Breast epithelium (tissue), 4 donors: ENCODE measurements at regions of chr19 and their contacts with region 1.

Region 1: DNA sequence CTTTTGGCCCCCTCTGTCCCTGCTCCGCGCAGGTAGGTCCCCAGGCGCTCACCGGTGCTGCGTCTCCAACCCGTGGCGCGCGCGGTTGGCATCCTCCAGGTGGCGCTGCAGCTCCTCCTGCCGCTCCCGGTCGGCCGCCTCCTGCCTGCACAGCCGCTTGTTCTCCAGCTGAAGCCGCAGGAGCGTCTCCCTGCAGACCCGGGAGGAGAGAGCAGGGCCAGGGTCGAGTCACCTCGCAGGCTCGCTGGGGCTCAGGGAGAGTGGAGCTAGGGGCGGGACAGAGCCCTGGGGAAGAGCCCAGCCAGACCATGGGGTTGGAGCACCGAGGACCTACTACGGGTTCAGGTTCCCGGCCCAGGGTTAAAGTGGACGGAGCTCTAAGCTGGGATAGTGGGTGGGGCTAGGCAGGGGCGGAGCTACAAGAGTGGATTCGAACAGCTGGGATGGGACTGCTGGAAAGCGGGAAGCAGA is 9.3 kb downstream of the HOOK2 start:
- DNase-seq: peak; percentile 77 to 79
- H3K4me3 ChIP-seq: peak overlapping the region; percentile 26 to 64 (median 49)
- H3K27ac ChIP-seq: peak overlapping the region; percentile 15 to 49
- H3K4me1 ChIP-seq: no peaks in the 10 kb centered on the region
- H3K27me3 ChIP-seq: no peaks in the 10 kb centered on the region
- CTCF ChIP-seq: peak; percentile 73 to 93 (median 91)
- POLR2A ChIP-seq: no peak

Region 2: GRCh38 chr19:12806239-12807081 is 40.4 kb after region 1 on chr19 and contains the start of gene RNASEH2A:
- intact Hi-C with region 1: loop called (anchors 5 kb)
- DNase-seq: peak; percentile 74 to 86
- H3K4me3 ChIP-seq: peak within 1 kb of the TSS; percentile 53 to 83 (median 71)
- H3K27ac ChIP-seq: peak within 1 kb of the TSS; percentile 59 to 68
- H3K4me1 ChIP-seq: peaks cover 0 to 5% of the 10 kb centered on the region in 2 donors
- H3K27me3 ChIP-seq: no peaks in the 10 kb centered on the region
- CTCF ChIP-seq: no peak
- POLR2A ChIP-seq: no peak
- total RNA-seq, gene RNASEH2A: 5.2 to 8.8 (median 8.5) TPM

Region 3: GRCh38 chr19:12847159-12848139 is 81.4 kb after region 1 on chr19:
- intact Hi-C with region 1: loop called (anchors 10 kb)
- DNase-seq: peak; percentile 74 to 85
- H3K4me3 ChIP-seq: peak overlapping the region in 2 of 3 donors; percentile 33 to 57
- H3K27ac ChIP-seq: no peak overlapping the region
- H3K4me1 ChIP-seq: peaks cover 0 to 5% of the 10 kb centered on the region in 2 donors
- H3K27me3 ChIP-seq: peaks cover 0 to 19% of the 10 kb centered on the region in 2 donors
- CTCF ChIP-seq: peak; percentile 96 to 99 (median 98)
- POLR2A ChIP-seq: no peak

Region 4: GRCh38 chr19:13093407-13094105 is 327.5 kb after region 1 on chr19:
- intact Hi-C with region 1: no loop called
- DNase-seq: peak; percentile 80 to 86
- H3K4me3 ChIP-seq: no peak overlapping the region
- H3K27ac ChIP-seq: peak overlapping the region; percentile 88 to 90
- H3K4me1 ChIP-seq: peaks cover 9 to 10% of the 10 kb centered on the region in 2 donors
- H3K27me3 ChIP-seq: no peaks in the 10 kb centered on the region
- CTCF ChIP-seq: peak; percentile 92 to 98 (median 95)
- POLR2A ChIP-seq: no peak